GM18951 (cell line): ENCODE measurements at regions of chr11 and their contacts with region 1.

Region 1: DNA sequence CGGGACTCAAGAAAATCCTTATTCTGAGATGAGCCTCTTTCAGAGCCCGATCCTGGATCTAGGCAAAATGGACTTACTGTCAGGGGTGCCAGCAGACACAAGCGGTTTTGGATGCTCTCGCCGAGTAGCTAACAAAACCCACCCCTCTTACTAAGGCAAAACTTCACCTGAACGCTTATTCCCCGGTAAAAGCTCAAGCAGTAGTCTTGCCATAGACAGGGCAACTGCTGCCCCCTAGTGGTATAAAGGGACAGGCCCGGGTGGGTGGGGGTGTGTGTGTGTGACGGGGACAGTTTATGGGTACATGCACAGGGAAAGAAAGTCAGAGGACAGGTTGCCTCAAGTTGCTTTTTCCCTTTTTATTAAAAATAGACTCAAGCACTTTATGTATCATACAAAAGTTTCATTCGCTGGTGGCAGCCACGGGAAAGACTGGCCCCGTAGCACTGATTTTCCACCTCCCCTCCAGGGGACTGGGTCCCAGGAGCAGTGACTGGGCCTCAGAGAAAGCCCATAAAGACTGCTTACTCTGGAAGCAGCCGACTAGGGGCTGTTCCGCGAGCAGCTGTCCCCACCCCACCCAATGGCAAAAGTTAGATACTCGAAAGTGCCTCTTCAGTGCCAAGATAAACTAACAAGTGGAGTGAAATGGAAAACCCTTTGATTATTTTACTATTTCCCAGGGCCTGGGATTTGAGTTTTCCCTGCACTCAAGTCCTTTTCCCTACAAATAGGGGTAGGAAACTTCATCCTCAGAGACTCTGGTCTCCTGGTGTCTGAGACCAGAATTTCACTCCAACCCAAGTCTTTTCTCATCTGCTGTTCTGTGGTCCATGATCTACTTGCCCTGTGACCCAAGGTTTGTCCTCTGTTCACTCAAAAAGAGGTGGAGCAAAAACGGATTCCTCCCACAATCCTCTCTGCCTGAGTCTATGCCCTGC is 4.7 kb downstream of the YPEL4 start:
- POLR2A ChIP-seq: no peak

Region 2: DNA sequence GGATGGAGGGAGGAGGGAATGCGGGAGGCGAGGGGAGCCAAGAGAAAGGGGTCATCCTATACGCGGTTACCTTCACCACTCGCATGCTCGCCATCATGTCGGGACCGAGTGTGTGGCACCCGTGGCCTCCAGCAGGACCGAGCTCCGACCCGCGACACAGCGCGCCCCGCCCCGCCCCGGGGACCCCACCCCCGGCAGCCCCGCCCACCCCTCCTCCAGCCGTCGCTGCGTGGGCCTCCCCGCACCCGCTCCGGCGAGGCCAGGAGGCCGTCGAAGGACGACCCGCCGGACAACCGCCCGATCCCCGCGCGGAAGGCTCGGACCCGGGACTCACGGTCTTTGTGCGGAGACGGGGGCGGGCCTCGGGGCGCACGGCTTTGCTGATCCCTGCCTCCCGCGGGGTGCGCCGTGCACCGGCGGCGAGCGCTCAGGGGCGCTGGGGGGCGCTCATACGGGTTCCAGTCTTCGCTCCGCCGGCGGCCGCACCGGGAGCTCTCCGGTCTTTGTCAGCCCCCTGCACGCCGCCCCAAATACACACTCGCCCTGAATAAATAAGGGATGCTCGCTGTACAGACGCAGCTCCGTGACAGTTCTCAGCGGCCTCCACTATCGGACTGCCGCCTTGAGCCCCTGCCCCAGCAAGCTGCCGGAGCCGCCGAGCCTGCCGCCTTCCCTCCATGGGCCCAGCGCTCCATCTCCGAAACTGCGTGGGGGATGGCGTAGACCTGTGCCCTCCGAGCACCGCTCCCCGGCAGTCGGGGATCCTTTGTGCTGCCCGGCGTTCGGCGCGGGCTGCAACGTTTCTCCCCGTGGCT is 77.3 kb before region 1 on chr11 and contains the start of gene UBE2L6:
- in situ Hi-C with region 1: loop called (anchors 5 kb)
- POLR2A ChIP-seq: peak; percentile 66